ENCODE measurements at regions of chr1 and their contacts with region 1.

Region 1: GRCh38 chr1:17125756-17126237 is 6.5 kb upstream of the PADI2 start:
- DNase-seq: peak; percentile 87
- H3K4me3 ChIP-seq: no peak overlapping the region
- H3K27ac ChIP-seq: no peak overlapping the region
- H3K4me1 ChIP-seq: peaks cover 0 to 23% (median 7%) of the 10 kb centered on the region in 4 donors
- H3K27me3 ChIP-seq: no peaks in the 10 kb centered on the region
- CTCF ChIP-seq: peak; percentile 67 to 97 (median 92)
- EP300 ChIP-seq: no peak
- POLR2A ChIP-seq: no peak

Region 2: GRCh38 chr1:17236779-17237560 is 111.2 kb after region 1 on chr1:
- intact Hi-C with region 1: loop called (anchors 1 kb)
- DNase-seq: peak; percentile 83
- H3K4me3 ChIP-seq: no peak overlapping the region
- H3K27ac ChIP-seq: no peak overlapping the region
- H3K4me1 ChIP-seq: peaks cover 0 to 16% (median 13%) of the 10 kb centered on the region in 4 donors
- H3K27me3 ChIP-seq: no peaks in the 10 kb centered on the region
- CTCF ChIP-seq: peak; percentile 46 to 88 (median 82)
- EP300 ChIP-seq: no peak
- POLR2A ChIP-seq: no peak

Region 3: DNA sequence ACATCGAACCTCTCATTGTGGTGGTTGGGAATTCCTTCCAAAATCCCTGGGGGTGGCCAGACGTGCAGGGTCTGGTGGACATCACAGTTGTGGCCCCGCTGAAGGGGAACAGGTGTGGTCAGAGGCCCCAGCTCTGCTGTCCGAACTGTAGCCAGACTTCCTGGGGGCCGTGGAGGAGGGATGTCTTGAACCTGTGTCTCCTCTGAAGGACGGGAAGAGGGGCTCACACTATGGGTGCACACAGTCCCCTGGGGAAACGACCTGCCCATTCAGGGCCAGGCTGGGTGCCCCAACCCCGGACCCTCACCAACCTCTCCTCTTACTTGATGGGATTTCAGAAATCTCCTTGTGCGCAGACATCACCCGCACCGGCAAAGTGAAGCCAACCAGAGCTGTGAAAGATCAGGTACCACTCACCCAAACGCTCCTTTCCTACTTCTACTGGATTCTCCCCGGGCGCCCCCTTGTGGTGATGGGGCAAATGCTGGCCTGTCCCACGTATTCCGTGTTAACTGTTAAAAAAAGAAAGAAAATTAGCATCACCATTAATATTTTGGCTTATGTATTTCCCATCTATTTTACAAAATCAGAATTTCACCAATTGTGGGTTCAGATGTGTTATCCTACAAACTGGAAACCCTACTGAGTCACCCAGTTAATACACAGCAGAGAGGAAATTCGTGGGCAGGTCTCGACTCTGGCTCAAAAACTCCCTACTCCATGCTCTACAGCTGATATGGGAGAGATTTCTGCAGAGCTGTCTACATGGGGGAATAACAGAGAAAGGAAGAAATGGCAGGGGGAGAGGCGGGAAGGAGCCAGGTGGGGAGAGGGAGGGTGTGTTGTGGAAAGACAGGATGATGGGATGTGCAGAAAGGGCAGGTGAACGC is 210.3 kb after region 1 on chr1:
- intact Hi-C with region 1: loop called (anchors 10 kb)
- DNase-seq: peak; percentile 63
- H3K4me3 ChIP-seq: no peak overlapping the region
- H3K27ac ChIP-seq: no peak overlapping the region
- H3K4me1 ChIP-seq: no peaks in the 10 kb centered on the region
- H3K27me3 ChIP-seq: peaks cover 0 to 21% (median 0%) of the 10 kb centered on the region in 3 donors
- CTCF ChIP-seq: peak in 3 of 4 experiments; percentile 37 to 62 (median 44)
- EP300 ChIP-seq: no peak
- POLR2A ChIP-seq: no peak

Region 4: GRCh38 chr1:17405898-17406759 is 280.3 kb after region 1 on chr1:
- intact Hi-C with region 1: loop called (anchors 10 kb)
- DNase-seq: no peak
- H3K4me3 ChIP-seq: no peak overlapping the region
- H3K27ac ChIP-seq: no peak overlapping the region
- H3K4me1 ChIP-seq: no peaks in the 10 kb centered on the region
- H3K27me3 ChIP-seq: no peaks in the 10 kb centered on the region
- CTCF ChIP-seq: peak; percentile 8 to 76 (median 56)
- EP300 ChIP-seq: no peak
- POLR2A ChIP-seq: no peak

Measured in sigmoid colon (tissue), 7 donors.